H1 (cell line): ENCODE measurements at regions of chr11 and their contacts with region 1.

Region 1: DNA sequence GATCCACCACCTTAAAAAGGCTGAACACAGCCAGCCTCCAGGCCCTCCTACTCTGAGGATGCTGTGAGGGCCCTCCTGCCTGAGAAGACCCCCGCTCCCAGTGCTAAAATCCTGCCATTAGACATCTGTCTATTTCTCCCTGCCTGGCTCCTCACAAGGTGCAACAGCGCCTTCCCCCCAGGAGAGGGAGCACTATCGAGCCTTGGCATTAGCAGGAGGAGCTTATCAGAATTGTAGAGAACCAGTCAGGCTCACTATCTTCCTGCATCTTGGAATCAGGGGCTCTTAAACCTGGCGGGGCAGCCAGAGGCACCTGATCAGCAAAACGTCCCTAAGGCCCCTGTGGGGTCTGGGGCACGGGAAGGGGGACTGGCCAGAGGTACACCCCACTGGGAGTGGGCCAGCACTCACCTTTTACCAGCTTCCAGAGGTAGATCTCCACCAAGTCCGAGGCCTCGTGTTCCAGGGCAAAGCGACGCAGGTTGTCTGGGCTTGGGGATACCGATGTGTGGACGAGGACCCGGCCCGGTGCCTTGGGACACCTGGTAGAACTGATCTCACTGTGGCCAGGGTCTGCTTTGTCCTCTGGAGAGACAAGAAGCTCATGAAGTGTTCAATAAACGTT is 28.7 kb downstream of the CHRDL2 start:
- DNase-seq: peak; percentile 49 to 81
- H3K4me3 ChIP-seq: no peak overlapping the region
- H3K27ac ChIP-seq: no peak overlapping the region
- H3K4me1 ChIP-seq: peaks cover 0 to 3% (median under 1%) of the 10 kb centered on the region in 4 experiments; a peak in 2 of 7 replicates
- H3K27me3 ChIP-seq: no peaks in the 10 kb centered on the region
- CTCF ChIP-seq: peak; percentile 87 to 97 (median 94)
- EP300 ChIP-seq: no peak
- POLR2A ChIP-seq: no peak
- RAD21 ChIP-seq: peak; percentile 66 to 79

Region 2: GRCh38 chr11:74577624-74578396 is 124.7 kb before region 1 on chr11:
- CTCF ChIA-PET with region 1: no interaction called
- POLR2A ChIA-PET with region 1: no interaction called
- DNase-seq: no peak
- H3K4me3 ChIP-seq: no peak overlapping the region
- H3K27ac ChIP-seq: no peak overlapping the region
- H3K4me1 ChIP-seq: no peaks in the 10 kb centered on the region
- H3K27me3 ChIP-seq: no peaks in the 10 kb centered on the region
- CTCF ChIP-seq: no peak
- EP300 ChIP-seq: no peak
- POLR2A ChIP-seq: no peak
- RAD21 ChIP-seq: no peak

Region 3: GRCh38 chr11:74615988-74616387 is 86.5 kb before region 1 on chr11:
- CTCF ChIA-PET with region 1: no interaction called
- POLR2A ChIA-PET with region 1: no interaction called
- DNase-seq: no peak
- H3K4me3 ChIP-seq: no peak overlapping the region
- H3K27ac ChIP-seq: no peak overlapping the region
- H3K4me1 ChIP-seq: no peaks in the 10 kb centered on the region
- H3K27me3 ChIP-seq: no peaks in the 10 kb centered on the region
- CTCF ChIP-seq: no peak
- EP300 ChIP-seq: no peak
- POLR2A ChIP-seq: no peak
- RAD21 ChIP-seq: no peak

Region 4: GRCh38 chr11:74677131-74677530 is 25.4 kb before region 1 on chr11:
- CTCF ChIA-PET with region 1: interaction called, 72 read pairs
- POLR2A ChIA-PET with region 1: interaction called, 3 read pairs
- DNase-seq: peak in 1 of 2 experiments; percentile 24
- H3K4me3 ChIP-seq: no peak overlapping the region
- H3K27ac ChIP-seq: no peak overlapping the region
- H3K4me1 ChIP-seq: no peaks in the 10 kb centered on the region
- H3K27me3 ChIP-seq: peaks cover 0 to 3% (median 0%) of the 10 kb centered on the region in 4 experiments; a peak in 1 of 7 replicates
- CTCF ChIP-seq: no peak
- EP300 ChIP-seq: no peak
- POLR2A ChIP-seq: no peak
- RAD21 ChIP-seq: no peak

Region 5: GRCh38 chr11:74717221-74717969 is 14.9 kb after region 1 on chr11:
- CTCF ChIA-PET with region 1: interaction called, 348 read pairs
- POLR2A ChIA-PET with region 1: interaction called, 3 read pairs
- DNase-seq: no peak
- H3K4me3 ChIP-seq: no peak overlapping the region
- H3K27ac ChIP-seq: no peak overlapping the region
- H3K4me1 ChIP-seq: peaks cover 0 to 11% (median 2%) of the 10 kb centered on the region in 4 experiments; a peak in 5 of 7 replicates
- H3K27me3 ChIP-seq: no peaks in the 10 kb centered on the region
- CTCF ChIP-seq: no peak
- EP300 ChIP-seq: no peak
- POLR2A ChIP-seq: no peak
- RAD21 ChIP-seq: no peak

Region 6: DNA sequence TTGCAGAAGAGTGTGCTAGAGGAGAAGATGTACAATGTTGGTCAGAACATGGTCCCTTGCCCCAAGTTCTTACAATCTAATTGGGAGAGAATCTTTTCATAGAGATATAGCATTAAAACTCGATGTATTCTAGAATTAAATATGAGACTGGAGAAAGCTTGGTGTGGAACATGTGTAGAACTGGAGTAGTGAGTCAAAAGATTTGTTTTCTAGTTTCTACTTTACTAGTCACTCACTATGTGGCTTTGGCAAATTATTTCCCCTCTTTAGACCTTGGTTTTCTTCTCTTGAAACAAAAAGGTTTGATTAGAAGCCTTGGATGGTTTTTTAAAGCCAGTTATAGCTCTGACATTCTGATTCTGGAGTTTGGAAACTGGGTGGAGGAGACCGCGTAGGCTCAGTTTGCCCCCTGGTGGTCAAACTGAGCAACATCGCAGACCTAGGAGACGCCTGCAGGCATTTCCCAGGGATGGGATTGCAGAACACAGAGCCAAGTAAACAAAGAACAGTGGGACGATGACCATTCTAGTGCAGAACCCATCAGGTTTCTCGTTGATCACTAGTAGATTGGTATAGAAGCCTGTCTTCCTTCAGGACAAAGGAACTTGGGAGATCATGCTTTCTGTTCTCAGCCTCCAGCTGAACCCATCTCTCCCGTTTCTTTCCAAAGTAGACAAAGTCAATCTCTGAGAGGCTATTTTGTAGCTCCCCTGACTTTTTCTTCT is 37.2 kb after region 1 on chr11:
- CTCF ChIA-PET with region 1: interaction called, 26 read pairs
- POLR2A ChIA-PET with region 1: no interaction called
- DNase-seq: peak in 1 of 2 experiments; percentile 46
- H3K4me3 ChIP-seq: no peak overlapping the region
- H3K27ac ChIP-seq: no peak overlapping the region
- H3K4me1 ChIP-seq: no peaks in the 10 kb centered on the region
- H3K27me3 ChIP-seq: no peaks in the 10 kb centered on the region; a peak in 1 of 7 replicates
- CTCF ChIP-seq: peak; percentile 80 to 88 (median 86)
- EP300 ChIP-seq: no peak
- POLR2A ChIP-seq: no peak
- RAD21 ChIP-seq: peak; percentile 67 to 83

Region 7: DNA sequence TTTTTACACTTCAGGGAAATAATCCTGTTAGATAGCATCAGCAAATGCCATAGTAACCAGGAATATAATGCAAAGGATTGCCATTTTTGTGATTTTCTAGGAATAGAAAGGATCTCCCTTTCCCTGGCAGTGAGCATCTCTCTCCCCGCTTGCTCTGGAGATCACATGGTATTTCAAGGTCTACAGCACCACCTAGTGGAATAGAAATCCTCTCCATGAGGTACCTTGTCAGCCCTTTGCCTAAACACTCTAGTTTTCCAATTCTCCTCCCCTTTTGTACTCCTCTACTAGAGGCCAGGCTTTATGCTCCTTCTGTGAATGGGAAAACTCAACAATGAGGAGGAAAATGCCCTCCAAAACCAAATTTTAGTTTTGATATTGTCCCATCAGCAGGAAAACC is 168.0 kb after region 1 on chr11:
- CTCF ChIA-PET with region 1: interaction called, 19 read pairs
- POLR2A ChIA-PET with region 1: no interaction called
- DNase-seq: no peak
- H3K4me3 ChIP-seq: no peak overlapping the region
- H3K27ac ChIP-seq: no peak overlapping the region
- H3K4me1 ChIP-seq: no peaks in the 10 kb centered on the region
- H3K27me3 ChIP-seq: no peaks in the 10 kb centered on the region
- CTCF ChIP-seq: peak in 2 of 3 experiments; percentile 63; a peak in 3 of 4 replicates
- EP300 ChIP-seq: no peak
- POLR2A ChIP-seq: no peak
- RAD21 ChIP-seq: peak; percentile 76 to 79

Region 8: DNA sequence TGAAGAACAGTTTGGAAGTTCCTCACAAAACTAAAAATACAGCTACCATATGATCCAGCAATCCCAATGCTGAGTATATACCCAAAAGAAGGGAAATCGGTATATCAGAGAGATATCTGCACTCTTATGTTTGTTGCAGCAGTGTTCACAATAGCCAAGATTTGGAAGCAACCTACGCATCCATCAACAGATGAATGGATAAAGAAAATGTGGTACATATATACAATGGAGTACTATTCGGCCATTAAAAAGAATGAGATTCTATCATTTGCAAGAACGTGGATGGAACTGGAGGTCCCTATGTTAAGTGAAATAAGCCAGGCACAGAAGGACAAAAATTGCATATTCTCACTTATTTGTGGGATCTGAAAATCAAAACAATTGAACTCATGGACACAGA is 199.8 kb after region 1 on chr11:
- CTCF ChIA-PET with region 1: no interaction called
- POLR2A ChIA-PET with region 1: no interaction called
- DNase-seq: no peak
- H3K4me3 ChIP-seq: no peak overlapping the region
- H3K27ac ChIP-seq: no peak overlapping the region
- H3K4me1 ChIP-seq: no peaks in the 10 kb centered on the region
- H3K27me3 ChIP-seq: no peaks in the 10 kb centered on the region
- CTCF ChIP-seq: no peak
- EP300 ChIP-seq: no peak
- POLR2A ChIP-seq: no peak
- RAD21 ChIP-seq: no peak